Right ventricle myocardium inferior (tissue), 1 donor: ENCODE measurements at regions of chr18 and their contacts with region 1.

Region 1: DNA sequence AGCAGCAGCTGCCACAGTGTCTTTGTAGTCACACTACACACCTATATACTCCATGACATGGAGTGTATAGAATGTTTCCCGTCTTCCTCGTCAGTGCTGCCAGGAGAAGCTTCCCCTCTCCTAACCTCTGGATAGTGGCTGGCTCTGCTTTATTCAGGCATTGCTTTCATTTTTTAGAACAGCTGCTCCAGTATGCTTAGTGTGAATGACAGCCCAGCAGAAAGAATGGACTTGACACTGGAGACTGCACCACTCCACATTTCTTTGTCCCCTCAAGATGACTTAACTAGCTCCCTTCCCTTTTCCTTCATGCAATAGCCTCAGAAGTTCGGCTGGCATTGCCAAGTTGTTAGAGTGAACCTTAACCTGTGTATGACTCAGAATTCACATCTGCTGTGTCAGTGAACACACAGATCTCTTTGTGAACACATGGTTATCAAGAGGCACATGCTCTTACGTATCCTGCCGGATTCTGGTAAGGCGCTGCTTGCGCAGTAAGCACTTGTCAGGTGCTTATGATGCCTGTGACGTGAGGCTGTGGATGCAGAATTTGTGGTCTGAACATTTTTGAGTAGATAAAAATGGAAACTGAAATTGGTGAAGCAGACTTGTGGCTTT is 73.9 kb downstream of the NEDD4L start:
- DNase-seq: no peak
- ATAC-seq: no peak

Region 2: GRCh38 chr18:57649556-57650500 is 468.1 kb before region 1 on chr18:
- intact Hi-C with region 1: loop called (anchors 10 kb)
- DNase-seq: no peak
- ATAC-seq: peak; percentile 92